A549 (cell line): ENCODE measurements at regions of chr14 and their contacts with region 1.

Region 1: GRCh38 chr14:34322940-34323418 is 139.1 kb downstream of the SPTSSA start:
- DNase-seq: peak; percentile 59 to 69
- ATAC-seq: peak; percentile 76 to 85; a peak in 5 of 6 replicates
- H3K4me3 ChIP-seq: no peak overlapping the region
- H3K27ac ChIP-seq: no peak overlapping the region
- H3K4me1 ChIP-seq: peaks cover 11% of the 10 kb centered on the region; the same call in 2 of the 3 replicates
- CTCF ChIP-seq: peak; percentile 76
- EP300 ChIP-seq: no peak
- POLR2A ChIP-seq: no peak
- RAD21 ChIP-seq: peak; percentile 20 to 35; a peak in 1 of 5 replicates

Region 2: DNA sequence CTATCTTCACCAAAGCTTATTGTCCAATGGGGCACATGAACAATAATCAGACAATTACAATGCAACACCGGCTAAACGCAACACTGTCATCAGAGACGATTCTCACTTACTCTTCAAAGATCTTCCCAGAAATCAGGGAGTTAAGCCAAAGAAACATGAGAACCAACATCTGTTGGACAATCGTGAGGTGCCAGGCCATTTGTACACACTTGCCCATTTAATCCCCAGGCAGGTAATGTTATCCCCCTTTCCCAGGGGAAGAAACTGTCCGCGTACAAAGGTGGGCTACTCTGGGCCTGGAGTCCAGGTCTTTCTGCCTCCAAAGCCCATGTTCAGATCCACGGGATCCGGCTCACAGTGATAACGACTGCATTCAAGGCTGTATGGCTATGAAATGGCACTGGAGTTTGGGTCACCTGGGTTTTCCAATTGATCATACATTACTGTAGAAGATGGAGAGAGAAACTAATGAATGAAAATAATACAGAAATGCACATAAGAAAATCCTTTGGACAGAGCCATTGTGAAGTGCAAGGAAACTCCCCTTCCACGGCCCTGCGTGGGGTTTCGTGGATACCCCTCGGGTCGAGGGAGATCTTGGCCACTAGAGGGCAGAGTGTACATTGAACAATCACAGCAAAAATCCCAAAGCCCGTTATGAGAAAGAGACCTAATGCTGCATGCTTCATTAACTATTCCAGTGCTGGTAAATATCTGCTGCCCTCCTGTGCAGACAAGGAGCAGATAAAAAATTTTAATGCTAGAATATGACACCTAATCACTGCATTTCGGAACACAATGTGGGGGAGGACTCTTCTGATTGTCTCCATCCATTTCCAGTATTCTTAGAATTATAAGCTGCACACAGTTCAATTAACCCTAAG is 483.5 kb before region 1 on chr14:
- CTCF ChIA-PET with region 1: interaction called, 16 read pairs
- POLR2A ChIA-PET with region 1: no interaction called
- DNase-seq: peak; percentile 40 to 42
- ATAC-seq: peak; percentile 87
- H3K4me3 ChIP-seq: no peak overlapping the region
- H3K27ac ChIP-seq: no peak overlapping the region
- H3K4me1 ChIP-seq: 0 out of 3 replicates have a peak, but pooled peaks cover 5% of the 10 kb centered on the region
- CTCF ChIP-seq: peak; percentile 81
- EP300 ChIP-seq: no peak
- POLR2A ChIP-seq: no peak
- RAD21 ChIP-seq: peak; percentile 77 to 87

Region 3: DNA sequence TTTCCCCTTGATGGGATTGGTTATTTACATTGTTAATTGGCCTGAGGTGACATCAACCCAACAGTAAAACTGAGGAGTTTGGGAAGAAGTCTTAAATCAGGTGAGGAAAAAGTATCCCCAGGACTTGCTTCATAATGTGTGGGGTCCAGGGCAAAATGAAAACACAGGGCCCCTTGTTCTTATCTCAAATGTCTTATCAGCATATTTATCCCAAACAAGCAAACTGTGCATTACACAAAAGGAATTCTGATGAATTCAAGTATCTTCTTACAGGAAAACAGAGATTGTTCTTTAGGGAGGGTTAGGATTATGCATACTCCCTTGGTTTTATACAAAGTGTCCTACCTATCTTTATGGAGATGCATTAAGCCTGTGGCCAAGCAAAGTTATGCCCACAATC is 39.4 kb before region 1 on chr14:
- CTCF ChIA-PET with region 1: no interaction called
- POLR2A ChIA-PET with region 1: no interaction called
- DNase-seq: no peak
- ATAC-seq: no peak
- H3K4me3 ChIP-seq: no peak overlapping the region
- H3K27ac ChIP-seq: no peak overlapping the region
- H3K4me1 ChIP-seq: no peaks in the 10 kb centered on the region
- CTCF ChIP-seq: no peak
- EP300 ChIP-seq: no peak
- POLR2A ChIP-seq: no peak
- RAD21 ChIP-seq: no peak

Region 4: GRCh38 chr14:34345718-34346465 is 22.9 kb after region 1 on chr14:
- CTCF ChIA-PET with region 1: interaction called, 13 read pairs
- POLR2A ChIA-PET with region 1: no interaction called
- DNase-seq: no peak
- ATAC-seq: no peak
- H3K4me3 ChIP-seq: no peak overlapping the region
- H3K27ac ChIP-seq: no peak overlapping the region
- H3K4me1 ChIP-seq: no peaks in the 10 kb centered on the region
- CTCF ChIP-seq: no peak
- EP300 ChIP-seq: no peak
- POLR2A ChIP-seq: no peak
- RAD21 ChIP-seq: no peak

Region 5: DNA sequence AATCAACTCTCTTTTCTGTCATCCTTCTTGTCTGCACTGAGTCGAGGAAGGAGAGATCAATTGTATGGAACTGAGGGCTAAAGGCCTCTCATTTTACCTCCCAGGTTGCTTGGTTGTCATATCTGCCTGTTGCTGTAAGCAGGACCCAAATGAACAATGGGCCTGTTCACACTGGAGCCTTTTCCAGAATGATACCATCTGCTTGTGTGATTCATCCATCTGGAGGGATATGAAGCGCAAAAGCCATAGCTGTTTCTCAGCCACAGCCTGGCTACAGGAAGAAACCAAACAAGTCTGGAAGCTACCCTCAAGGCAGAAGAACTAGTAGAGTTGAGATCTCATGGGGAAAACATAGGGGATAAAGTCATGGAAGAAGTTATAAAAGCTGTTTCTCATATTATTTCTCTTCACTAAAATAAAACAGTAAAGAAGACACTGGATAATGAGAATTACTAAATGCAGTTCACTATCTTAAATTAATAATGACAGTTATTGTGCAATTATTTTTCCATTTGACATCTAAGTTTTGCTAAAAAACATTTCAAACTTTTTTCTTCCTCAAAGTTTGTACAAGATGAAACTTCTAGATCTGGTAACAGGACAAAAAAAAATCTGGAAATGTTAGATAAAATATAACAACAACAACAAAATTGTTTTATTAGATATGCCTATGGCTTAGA is 32.7 kb after region 1 on chr14:
- CTCF ChIA-PET with region 1: interaction called, 15 read pairs
- POLR2A ChIA-PET with region 1: no interaction called
- DNase-seq: no peak
- ATAC-seq: no peak
- H3K4me3 ChIP-seq: no peak overlapping the region
- H3K27ac ChIP-seq: peak overlapping the region in 1 of 2 experiments; percentile 27; a peak in 2 of 6 replicates
- H3K4me1 ChIP-seq: no peaks in the 10 kb centered on the region; the same call in 2 of the 3 replicates
- CTCF ChIP-seq: no peak
- EP300 ChIP-seq: no peak
- POLR2A ChIP-seq: no peak
- RAD21 ChIP-seq: no peak

Region 6: DNA sequence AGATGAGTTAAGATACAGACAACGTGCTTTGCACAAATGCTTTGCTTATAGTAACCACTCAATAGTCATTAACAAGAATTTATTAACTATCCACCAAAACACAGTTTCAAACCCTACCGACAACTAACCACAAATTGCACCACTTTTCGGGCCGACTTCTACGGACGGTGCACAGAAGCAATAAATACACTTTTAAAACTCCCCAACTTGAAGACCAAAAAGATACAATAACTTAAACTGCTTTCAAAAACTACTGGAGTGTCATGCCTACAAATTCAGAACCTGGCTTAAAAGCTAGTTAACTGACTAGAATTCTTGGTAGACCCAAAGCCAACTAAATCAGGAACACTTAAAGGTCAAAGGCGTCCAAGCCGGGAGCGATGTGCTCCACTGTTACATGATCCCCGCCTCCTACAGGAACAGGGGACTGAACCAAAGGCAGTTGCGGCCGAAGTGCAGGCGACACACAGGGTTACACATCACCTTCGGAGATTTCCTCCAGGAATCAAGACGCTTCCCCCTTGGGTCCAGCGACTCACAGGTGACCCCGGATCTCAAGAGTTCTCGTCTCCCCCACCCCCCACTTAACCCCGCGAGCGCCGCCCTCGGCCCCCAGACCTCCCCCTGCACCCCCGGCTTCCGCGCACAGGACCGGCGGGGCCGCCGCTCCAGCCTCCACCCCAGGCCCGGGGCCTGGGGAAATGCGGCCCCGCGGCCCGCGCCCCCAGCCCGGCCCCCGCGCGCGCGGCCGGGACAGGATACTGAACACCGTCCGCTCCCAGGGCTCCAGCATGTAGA is 138.6 kb after region 1 on chr14:
- CTCF ChIA-PET with region 1: interaction called, 10 read pairs
- POLR2A ChIA-PET with region 1: no interaction called
- DNase-seq: peak; percentile 41 to 73
- ATAC-seq: peak; percentile 63 to 68
- H3K4me3 ChIP-seq: peak overlapping the region; percentile 79
- H3K27ac ChIP-seq: peak overlapping the region; percentile 88 to 92
- H3K4me1 ChIP-seq: peaks cover 36% of the 10 kb centered on the region
- CTCF ChIP-seq: no peak
- EP300 ChIP-seq: no peak
- POLR2A ChIP-seq: no peak
- RAD21 ChIP-seq: no peak; a peak in 1 of 5 replicates

Region 7: DNA sequence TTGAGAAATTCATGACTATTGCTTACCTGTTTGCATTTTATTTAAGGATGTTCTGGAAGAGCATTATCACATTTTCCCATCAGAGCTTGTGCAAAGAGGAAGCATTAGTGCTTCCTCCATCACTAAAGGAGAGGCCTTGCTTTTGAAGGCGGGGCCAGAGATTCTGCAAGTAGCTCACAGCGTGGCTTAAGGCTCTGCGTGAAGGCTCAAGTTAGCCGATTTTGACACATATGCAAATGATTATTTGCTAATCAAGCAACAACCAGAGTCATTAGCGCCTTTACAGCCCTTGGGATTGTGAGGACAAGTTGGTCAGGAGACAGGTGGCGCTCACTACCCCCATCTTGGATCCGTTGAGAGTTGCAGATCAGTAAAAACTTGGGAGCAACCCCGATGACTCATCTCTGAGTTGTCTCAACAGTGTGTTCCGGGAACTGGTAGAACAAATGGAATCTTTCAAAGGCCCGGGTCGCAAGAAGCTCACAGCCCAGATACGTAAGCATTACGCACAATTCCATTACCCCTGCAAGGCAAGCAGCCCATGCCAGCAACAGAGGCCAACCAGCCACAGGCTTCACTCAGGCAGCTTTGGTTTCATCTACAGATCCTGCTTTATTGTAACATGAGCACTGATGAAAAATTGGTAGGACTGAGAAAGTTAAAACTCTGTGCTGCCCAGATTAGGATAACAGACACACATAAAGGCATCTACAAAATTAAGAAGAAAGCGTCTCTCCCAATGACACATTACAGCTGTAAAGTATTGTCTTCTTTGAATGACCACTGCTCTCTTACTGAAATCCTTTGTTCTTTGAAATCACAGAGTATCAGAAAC is 173.9 kb after region 1 on chr14:
- CTCF ChIA-PET with region 1: interaction called, 104 read pairs
- POLR2A ChIA-PET with region 1: no interaction called
- DNase-seq: peak; percentile 98 to 99
- ATAC-seq: peak; percentile 93 to 98
- H3K4me3 ChIP-seq: no peak overlapping the region; the same call in 2 of the 3 replicates
- H3K27ac ChIP-seq: peak overlapping the region; percentile 89 to 95
- H3K4me1 ChIP-seq: peaks cover 45% of the 10 kb centered on the region
- CTCF ChIP-seq: peak; percentile 42
- EP300 ChIP-seq: peak; percentile 64 to 89; a peak in 3 of 5 replicates
- POLR2A ChIP-seq: peak; percentile 42
- RAD21 ChIP-seq: peak; percentile 44 to 57; a peak in 4 of 5 replicates